MCF 10A (cell line): ENCODE measurements at regions of chr7 and their contacts with region 1.

Region 1: DNA sequence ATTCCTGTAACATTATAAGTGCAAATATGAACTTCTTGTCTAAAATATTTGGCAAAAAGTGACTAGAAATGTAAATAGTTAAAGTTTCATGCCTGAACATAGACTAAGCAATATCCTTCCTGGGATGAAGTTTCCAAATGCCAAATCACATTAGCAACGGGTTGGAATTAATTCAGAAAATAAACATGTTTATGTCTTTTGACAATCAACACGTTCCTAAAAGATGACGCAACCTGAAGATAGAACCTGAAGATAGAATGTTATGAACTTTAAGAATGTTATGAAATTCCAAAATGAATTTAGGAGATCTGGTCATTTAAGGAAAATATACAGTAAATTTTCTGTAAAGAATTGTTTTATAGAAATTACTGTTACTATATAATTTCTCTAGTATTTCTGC is 9.2 kb downstream of the LAMB4 start:
- DNase-seq: no peak
- H3K4me3 Mint-ChIP-seq: no peak overlapping the region
- H3K27ac Mint-ChIP-seq: peak overlapping the region; percentile 39
- H3K4me1 Mint-ChIP-seq: no peaks in the 10 kb centered on the region
- H3K27me3 Mint-ChIP-seq: no peaks in the 10 kb centered on the region
- CTCF ChIP-seq: no peak

Region 2: GRCh38 chr7:107643407-107643806 is 477.5 kb before region 1 on chr7:
- CTCF ChIA-PET with region 1: no interaction called
- POLR2A ChIA-PET with region 1: no interaction called
- intact Hi-C with region 1: no loop called
- DNase-seq: peak; percentile 17
- H3K4me3 Mint-ChIP-seq: no peak overlapping the region
- H3K27ac Mint-ChIP-seq: no peak overlapping the region
- H3K4me1 Mint-ChIP-seq: peaks cover 6% of the 10 kb centered on the region
- H3K27me3 Mint-ChIP-seq: peaks cover 16% of the 10 kb centered on the region
- CTCF ChIP-seq: no peak

Region 3: DNA sequence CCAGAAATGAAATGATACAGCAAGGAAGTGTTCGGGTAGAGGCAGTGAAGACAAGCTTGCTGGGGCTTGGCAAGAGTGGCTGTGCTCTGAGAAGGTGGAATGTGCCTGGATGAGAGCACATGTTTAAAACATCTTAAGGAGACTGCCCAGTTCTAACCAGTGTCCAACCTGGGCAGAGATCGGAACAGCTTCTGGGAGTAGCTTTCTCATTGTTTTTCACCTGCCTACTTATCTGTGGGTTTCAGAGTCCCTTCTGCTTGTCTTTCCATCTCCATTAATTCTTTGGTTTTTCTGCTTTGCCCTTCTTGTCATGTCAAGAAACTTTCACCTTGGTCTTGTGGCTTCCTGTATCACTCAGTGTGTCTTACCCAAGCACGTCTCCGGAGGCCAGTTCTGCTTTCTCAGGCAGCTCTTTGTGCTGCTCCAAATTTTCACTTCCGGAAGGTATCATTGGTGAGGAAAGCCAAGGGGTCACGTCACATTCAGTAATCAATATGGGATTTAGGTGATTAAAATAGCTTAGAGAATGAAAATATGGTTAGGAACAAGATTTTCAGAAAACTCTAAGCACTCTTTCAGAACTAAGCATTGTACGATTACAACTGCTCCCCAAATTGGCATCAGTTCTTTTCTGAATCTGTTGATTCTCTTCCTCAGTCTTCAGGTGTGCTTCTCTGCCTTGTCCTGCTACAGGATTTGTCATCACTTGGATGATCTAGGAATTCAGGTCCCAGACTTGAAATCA is 14.7 kb after region 1 on chr7:
- CTCF ChIA-PET with region 1: interaction called, 10 read pairs
- POLR2A ChIA-PET with region 1: interaction called, 5 read pairs
- intact Hi-C with region 1: no loop called
- DNase-seq: no peak
- H3K4me3 Mint-ChIP-seq: no peak overlapping the region
- H3K27ac Mint-ChIP-seq: no peak overlapping the region
- H3K4me1 Mint-ChIP-seq: peaks cover 6% of the 10 kb centered on the region
- H3K27me3 Mint-ChIP-seq: no peaks in the 10 kb centered on the region
- CTCF ChIP-seq: no peak